WTC11 (cell line): ENCODE measurements at regions of chr20 and their contacts with region 1.

Region 1: GRCh38 chr20:3767427-3768341 is at the start of gene ADISSP:
- DNase-seq: peak; percentile 99
- ATAC-seq: peak; percentile 94
- H3K4me3 Mint-ChIP-seq: peak within 1 kb of the TSS; percentile 94
- H3K27ac Mint-ChIP-seq: peak within 1 kb of the TSS; percentile 79; the same call in 1 of the 2 replicates
- H3K4me1 Mint-ChIP-seq: peaks cover 19% of the 10 kb centered on the region
- H3K27me3 Mint-ChIP-seq: peaks cover 13% of the 10 kb centered on the region
- CTCF ChIP-seq: no peak
- total RNA-seq, gene ADISSP: 109 to 129 TPM (median 113 TPM) in 3 replicates

Region 2: DNA sequence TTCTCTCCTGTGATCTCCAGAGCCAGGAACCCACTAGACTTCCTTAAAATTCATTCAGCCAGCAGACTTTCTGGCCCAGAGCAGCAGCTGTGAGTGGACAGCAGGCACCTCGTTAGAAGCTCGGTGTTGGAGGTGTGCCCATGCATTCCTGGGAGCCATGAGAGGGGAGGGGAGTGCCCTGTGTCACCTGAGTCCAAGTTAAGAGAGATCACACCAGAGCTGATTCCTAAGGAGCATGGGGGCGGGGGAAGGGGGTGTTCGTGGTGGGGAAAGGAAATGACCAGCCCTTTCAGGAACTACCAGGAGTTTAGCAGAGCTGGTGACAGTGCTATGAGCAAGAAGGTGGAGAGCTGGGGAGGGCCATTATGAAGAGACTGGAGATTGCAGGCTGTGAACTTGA is 151.4 kb before region 1 on chr20:
- CTCF ChIA-PET with region 1: no interaction called
- POLR2A ChIA-PET with region 1: no interaction called
- DNase-seq: peak; percentile 42
- ATAC-seq: peak; percentile 70
- H3K4me3 Mint-ChIP-seq: no peak overlapping the region
- H3K27ac Mint-ChIP-seq: peak overlapping the region; percentile 73; the same call in 1 of the 2 replicates
- H3K4me1 Mint-ChIP-seq: peaks cover 10% of the 10 kb centered on the region
- H3K27me3 Mint-ChIP-seq: no peaks in the 10 kb centered on the region
- CTCF ChIP-seq: no peak

Region 3: DNA sequence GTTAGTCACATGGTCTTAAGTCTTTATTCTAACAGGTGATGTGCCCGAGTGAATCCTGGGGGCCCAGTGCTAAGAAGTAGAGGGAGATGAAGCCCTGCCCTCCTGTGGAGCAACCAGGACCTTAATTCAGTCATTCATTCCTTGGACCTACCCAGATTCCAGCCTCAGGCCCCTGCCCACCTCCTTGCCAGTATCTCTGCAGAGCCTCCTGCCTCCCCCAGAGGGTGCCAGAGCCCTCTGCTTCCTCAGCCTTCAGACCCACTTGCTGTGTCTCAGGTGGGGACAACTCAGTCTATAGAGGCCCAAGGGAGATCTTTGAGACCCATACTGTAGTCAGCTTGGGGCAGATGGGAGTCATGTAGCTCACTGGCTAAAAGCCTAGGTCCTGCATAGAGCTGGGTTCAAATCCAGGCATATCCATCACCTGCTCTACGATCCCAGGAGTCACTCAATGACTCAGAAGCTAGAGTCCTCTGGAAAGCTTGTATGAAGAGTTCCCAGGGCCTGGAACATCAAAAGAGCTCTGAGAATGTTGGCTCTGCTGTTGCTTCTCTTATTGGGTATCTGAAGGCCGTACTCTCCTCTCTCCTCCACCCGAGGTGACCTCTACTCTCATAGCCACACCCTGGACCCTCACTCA is 51.4 kb before region 1 on chr20:
- CTCF ChIA-PET with region 1: interaction called, 33 read pairs
- POLR2A ChIA-PET with region 1: no interaction called
- DNase-seq: peak; percentile 70
- ATAC-seq: peak; percentile 98
- H3K4me3 Mint-ChIP-seq: no peak overlapping the region
- H3K27ac Mint-ChIP-seq: 0 out of 2 replicates have a peak overlapping the region, but pooled peaks have one; percentile 8
- H3K4me1 Mint-ChIP-seq: peaks cover 8% of the 10 kb centered on the region
- H3K27me3 Mint-ChIP-seq: no peaks in the 10 kb centered on the region
- CTCF ChIP-seq: peak; percentile 41; the same call in 1 of the 2 replicates

Region 4: GRCh38 chr20:3781153-3781910 is 13.6 kb after region 1 on chr20 and contains the start of gene SPEF1:
- CTCF ChIA-PET with region 1: interaction called, 53 read pairs
- POLR2A ChIA-PET with region 1: interaction called, 14 read pairs
- DNase-seq: peak; percentile 83
- ATAC-seq: peak; percentile 58
- H3K4me3 Mint-ChIP-seq: peak within 1 kb of the TSS; percentile 67
- H3K27ac Mint-ChIP-seq: peak within 1 kb of the TSS; percentile 29; the same call in 1 of the 2 replicates
- H3K4me1 Mint-ChIP-seq: peaks cover 45% of the 10 kb centered on the region
- H3K27me3 Mint-ChIP-seq: peaks cover 42% of the 10 kb centered on the region
- CTCF ChIP-seq: no peak
- total RNA-seq, gene SPEF1: 0.41 to 0.72 TPM (median 0.64 TPM) in 3 replicates

Region 5: DNA sequence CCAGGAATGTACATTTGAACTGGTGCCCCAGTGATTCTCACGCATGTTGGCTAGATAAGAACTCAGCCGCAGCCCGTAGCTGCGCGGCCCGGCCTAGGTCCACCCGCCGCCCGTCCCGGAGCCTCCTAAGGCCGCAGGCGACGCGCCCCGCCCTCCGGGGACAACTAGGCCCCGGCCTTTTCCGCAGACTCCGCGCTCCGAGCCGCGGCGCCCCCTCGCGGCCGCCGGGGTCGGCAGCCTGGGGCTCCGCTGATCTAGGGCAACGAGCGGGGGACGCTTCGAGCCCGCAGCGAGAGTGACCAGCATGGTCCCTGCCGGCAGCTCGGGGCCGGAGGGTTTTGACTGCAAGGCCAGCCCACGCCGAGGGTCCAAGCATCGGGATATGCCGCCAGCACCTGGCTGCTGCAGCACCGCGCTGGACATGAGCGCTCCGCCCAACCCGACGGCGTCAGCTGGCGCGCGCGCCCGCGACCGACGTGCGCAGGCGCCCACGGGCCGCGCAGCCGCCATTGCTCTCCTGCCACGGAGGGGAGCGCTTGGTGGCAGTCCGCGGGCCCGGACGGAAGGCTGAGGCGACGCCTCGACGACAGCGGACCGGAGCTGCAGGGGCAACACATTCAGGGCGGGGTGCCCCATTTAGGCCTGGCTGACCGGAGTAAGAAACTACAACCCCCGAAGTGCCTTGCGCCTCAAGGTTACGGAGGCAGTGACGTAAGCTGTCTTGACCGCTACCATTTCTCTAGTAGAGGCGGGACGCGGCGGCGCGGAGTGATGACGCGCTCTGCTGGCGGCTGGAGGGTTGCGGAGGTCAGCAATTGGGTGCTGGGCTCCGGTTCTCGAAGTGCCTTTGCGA is 52.6 kb after region 1 on chr20 and contains the start of gene AP5S1:
- CTCF ChIA-PET with region 1: interaction called, 35 read pairs
- POLR2A ChIA-PET with region 1: no interaction called
- DNase-seq: peak; percentile 99
- ATAC-seq: peak; percentile 80
- H3K4me3 Mint-ChIP-seq: peak within 1 kb of the TSS; percentile 78
- H3K27ac Mint-ChIP-seq: peak within 1 kb of the TSS; percentile 97
- H3K4me1 Mint-ChIP-seq: peaks cover 28% of the 10 kb centered on the region
- H3K27me3 Mint-ChIP-seq: no peaks in the 10 kb centered on the region
- CTCF ChIP-seq: peak; percentile 94
- total RNA-seq, gene AP5S1: 2.8 to 4.1 TPM (median 3.1 TPM) in 3 replicates

Region 6: GRCh38 chr20:4082406-4083097 is 314.9 kb after region 1 on chr20:
- CTCF ChIA-PET with region 1: interaction called, 16 read pairs
- POLR2A ChIA-PET with region 1: interaction called, 3 read pairs
- DNase-seq: peak; percentile 57
- ATAC-seq: peak; percentile 66
- H3K4me3 Mint-ChIP-seq: peak overlapping the region; percentile 32
- H3K27ac Mint-ChIP-seq: peak overlapping the region; percentile 68
- H3K4me1 Mint-ChIP-seq: peaks cover 25% of the 10 kb centered on the region
- H3K27me3 Mint-ChIP-seq: peaks cover 19% of the 10 kb centered on the region
- CTCF ChIP-seq: no peak

Region 7: GRCh38 chr20:4160761-4161305 is 393.1 kb after region 1 on chr20:
- CTCF ChIA-PET with region 1: no interaction called
- POLR2A ChIA-PET with region 1: no interaction called
- DNase-seq: peak; percentile 30
- ATAC-seq: peak; percentile 62
- H3K4me3 Mint-ChIP-seq: no peak overlapping the region
- H3K27ac Mint-ChIP-seq: peak overlapping the region; percentile 78; the same call in 1 of the 2 replicates
- H3K4me1 Mint-ChIP-seq: peaks cover 35% of the 10 kb centered on the region
- H3K27me3 Mint-ChIP-seq: no peaks in the 10 kb centered on the region
- CTCF ChIP-seq: no peak